Spleen (tissue), 13 donors: ENCODE measurements at regions of chr9 and their contacts with region 1.

Region 1: GRCh38 chr9:16809912-16810610 is 60.4 kb downstream of the BNC2 start:
- DNase-seq: no peak
- H3K4me3 ChIP-seq: no peak overlapping the region
- H3K27ac ChIP-seq: no peak overlapping the region
- H3K4me1 ChIP-seq: no peaks in the 10 kb centered on the region
- H3K27me3 ChIP-seq: no peaks in the 10 kb centered on the region
- CTCF ChIP-seq: no peak
- POLR2A ChIP-seq: no peak

Region 2: DNA sequence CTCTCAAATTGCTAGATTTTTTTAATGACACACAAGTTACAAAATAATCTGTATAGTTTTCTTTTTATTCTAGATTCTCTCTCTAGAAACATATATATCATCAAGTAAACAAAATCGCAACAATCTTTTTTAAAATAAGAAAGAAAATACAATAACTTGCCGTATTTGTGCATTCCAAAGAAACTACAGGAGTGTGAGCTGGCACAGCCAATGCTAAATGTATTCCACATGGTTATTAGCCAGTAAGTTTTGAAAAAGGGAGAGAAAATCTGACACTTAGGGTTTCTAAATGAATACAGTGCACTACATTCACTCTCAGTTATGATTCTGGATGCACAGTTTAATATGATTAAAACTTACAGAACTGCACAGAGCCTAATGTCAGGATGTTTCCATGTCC is 57.5 kb before region 1 on chr9:
- intact Hi-C with region 1: no loop called
- DNase-seq: no peak
- H3K4me3 ChIP-seq: no peak overlapping the region
- H3K27ac ChIP-seq: no peak overlapping the region
- H3K4me1 ChIP-seq: no peaks in the 10 kb centered on the region
- H3K27me3 ChIP-seq: no peaks in the 10 kb centered on the region
- CTCF ChIP-seq: no peak
- POLR2A ChIP-seq: no peak

Region 3: GRCh38 chr9:16768816-16769215 is 41.2 kb before region 1 on chr9:
- intact Hi-C with region 1: loop called (anchors 10 kb)
- DNase-seq: no peak
- H3K4me3 ChIP-seq: no peak overlapping the region
- H3K27ac ChIP-seq: no peak overlapping the region
- H3K4me1 ChIP-seq: no peaks in the 10 kb centered on the region
- H3K27me3 ChIP-seq: no peaks in the 10 kb centered on the region
- CTCF ChIP-seq: no peak
- POLR2A ChIP-seq: no peak